ENCODE measurements at regions of chr9 and their contacts with region 1.

Region 1: DNA sequence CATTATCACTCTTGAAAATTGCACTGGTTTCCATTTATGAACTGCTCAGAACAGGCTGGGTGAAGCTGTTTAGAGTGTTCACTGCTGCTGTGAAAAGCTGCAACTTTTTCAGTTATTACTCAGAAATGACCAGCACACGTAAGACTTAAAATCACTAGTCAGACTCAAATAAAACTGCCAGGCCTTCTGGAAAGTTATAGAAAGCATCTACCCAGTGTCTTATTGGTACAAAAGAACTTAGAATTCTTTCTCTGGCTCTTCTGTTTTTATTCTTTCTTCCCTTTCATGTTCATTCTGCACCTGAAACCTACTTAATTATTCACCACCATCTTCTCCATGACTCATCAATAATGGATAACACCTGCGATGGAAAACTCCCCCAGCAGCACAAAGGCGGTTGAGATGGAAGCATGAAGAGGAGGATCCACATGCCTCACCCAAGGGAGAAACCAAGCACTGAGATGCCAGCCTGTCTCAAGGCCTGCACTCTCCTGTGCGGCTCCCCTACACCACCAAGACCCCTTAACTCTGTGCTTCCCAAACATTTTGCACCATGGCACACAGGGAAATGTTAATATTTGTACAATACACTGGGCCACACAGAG is 171.9 kb downstream of the ENTREP1 start:
- DNase-seq: no peak
- H3K4me3 Mint-ChIP-seq: peak overlapping the region; percentile 5
- H3K27ac Mint-ChIP-seq: peak overlapping the region; percentile 73
- H3K4me1 Mint-ChIP-seq: peaks cover 50% of the 10 kb centered on the region
- H3K27me3 Mint-ChIP-seq: no peaks in the 10 kb centered on the region

Region 2: DNA sequence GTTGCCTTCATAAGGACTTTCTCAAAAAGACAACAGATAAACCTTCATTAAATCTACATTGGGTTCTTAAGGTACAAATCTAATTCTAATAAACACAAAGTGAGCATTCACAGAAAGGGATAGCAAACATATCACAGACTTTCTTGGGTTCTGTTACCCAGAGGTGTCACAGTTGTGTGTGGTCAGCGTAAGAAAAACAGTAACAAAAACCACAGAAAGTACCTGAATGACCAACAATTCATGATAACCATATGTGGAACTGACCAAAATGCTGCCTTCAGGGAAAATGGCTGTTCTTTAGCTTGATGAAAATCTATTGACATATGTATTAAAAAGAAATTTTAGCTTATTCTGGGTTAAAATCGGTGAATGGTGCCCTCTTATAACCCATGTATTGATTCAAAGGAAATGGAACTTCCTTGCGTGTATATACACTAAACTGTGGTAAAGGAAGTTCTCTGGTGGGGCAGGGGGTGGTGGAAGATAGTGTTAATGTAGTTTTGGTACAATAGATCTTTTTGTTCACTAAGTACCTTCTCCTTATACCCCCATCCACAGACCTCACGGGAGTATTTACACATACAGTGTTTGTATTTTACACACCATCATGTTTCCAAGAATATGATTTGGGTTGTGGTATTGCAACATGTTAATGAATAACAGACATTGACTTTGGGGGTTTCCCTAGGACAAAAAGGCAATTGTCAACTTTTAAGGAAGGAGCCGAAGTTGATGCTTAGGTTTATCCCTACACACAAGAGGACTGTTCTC is 22.7 kb after region 1 on chr9:
- intact Hi-C with region 1: loop called (anchors 1 kb)
- DNase-seq: no peak
- H3K4me3 Mint-ChIP-seq: peak overlapping the region; percentile 11
- H3K27ac Mint-ChIP-seq: peak overlapping the region; percentile 38
- H3K4me1 Mint-ChIP-seq: peaks cover 49% of the 10 kb centered on the region
- H3K27me3 Mint-ChIP-seq: no peaks in the 10 kb centered on the region

Region 3: DNA sequence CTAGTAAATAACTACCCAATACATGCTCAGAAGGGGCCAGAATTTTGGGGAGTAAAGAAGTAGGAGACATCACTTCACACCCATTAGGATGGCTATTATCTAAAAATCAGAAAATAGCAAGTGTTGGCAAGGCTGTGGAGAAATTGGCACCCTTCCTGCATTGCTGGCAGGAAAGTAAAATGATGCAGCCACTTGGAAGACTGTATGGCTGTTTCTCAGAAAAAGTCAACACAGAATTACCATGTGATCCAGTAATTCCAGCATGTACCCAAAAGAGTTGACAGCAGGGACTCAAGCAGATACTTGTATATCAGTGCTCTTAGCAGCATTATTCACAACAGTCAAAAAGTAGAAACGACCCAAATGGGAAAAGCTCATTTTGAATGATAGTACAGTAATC is 67.6 kb after region 1 on chr9:
- intact Hi-C with region 1: no loop called
- DNase-seq: no peak
- H3K4me3 Mint-ChIP-seq: no peak overlapping the region
- H3K27ac Mint-ChIP-seq: no peak overlapping the region
- H3K4me1 Mint-ChIP-seq: no peaks in the 10 kb centered on the region
- H3K27me3 Mint-ChIP-seq: peaks cover 8% of the 10 kb centered on the region

Region 4: DNA sequence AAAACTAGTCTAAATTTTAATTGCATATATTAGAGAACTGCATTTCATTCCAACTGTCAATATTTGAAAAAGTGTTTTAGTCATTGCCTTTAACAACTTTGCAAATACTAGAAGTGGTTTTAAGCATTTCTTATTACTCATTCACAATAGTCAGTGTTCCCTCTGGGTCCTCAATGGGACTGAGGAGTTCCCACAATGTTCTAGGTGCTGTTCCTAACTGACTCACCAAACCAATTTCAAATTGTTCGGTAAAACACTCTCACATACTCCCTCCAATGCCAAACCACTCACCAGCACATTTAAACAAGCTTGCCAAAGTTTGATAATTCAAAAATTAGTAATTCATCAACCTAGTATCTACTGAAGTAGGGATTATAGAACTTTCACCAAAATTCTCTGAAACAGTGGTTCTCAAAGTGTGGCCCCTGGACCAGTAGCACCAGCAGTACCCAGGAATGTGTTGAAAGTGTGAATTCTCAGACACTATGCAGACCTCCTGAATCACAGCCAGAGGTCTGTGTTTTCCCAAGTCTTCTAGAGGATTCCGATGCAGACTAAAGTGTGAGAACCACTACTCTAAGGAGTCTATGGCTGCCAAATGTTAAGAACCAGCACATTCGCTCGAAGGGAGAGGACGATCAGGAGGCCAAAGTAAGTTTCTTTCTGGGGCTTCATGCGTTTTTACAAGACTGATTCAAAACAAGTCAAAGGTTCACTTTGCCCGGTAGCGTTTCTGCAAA is 102.5 kb after region 1 on chr9:
- intact Hi-C with region 1: no loop called
- DNase-seq: no peak
- H3K4me3 Mint-ChIP-seq: no peak overlapping the region
- H3K27ac Mint-ChIP-seq: no peak overlapping the region
- H3K4me1 Mint-ChIP-seq: no peaks in the 10 kb centered on the region
- H3K27me3 Mint-ChIP-seq: no peaks in the 10 kb centered on the region

Region 5: GRCh38 chr9:69611221-69611620 is 114.3 kb after region 1 on chr9:
- intact Hi-C with region 1: no loop called
- DNase-seq: no peak
- H3K4me3 Mint-ChIP-seq: no peak overlapping the region
- H3K27ac Mint-ChIP-seq: no peak overlapping the region
- H3K4me1 Mint-ChIP-seq: no peaks in the 10 kb centered on the region
- H3K27me3 Mint-ChIP-seq: peaks cover 2% of the 10 kb centered on the region